Sigmoid colon (tissue), 7 donors: ENCODE measurements at regions of chr20 and their contacts with region 1.

Region 1: GRCh38 chr20:34558320-34559218 is at the start of gene MAP1LC3A:
- DNase-seq: peak; percentile 99
- H3K4me3 ChIP-seq: peak within 1 kb of the TSS; percentile 70 to 94 (median 86)
- H3K27ac ChIP-seq: peak within 1 kb of the TSS; percentile 93 to 98 (median 96)
- H3K4me1 ChIP-seq: peaks cover 0 to 20% (median 12%) of the 10 kb centered on the region in 4 donors
- H3K27me3 ChIP-seq: no peaks in the 10 kb centered on the region
- CTCF ChIP-seq: no peak
- EP300 ChIP-seq: no peak
- POLR2A ChIP-seq: peak in 1 of 2 donors; percentile 5
- total RNA-seq, gene MAP1LC3A: 51.0 to 88.1 (median 77.8) TPM

Region 2: GRCh38 chr20:34516247-34517113 is 42.1 kb before region 1 on chr20 and contains the start of gene DYNLRB1:
- intact Hi-C with region 1: loop called (anchors 2 kb)
- DNase-seq: peak; percentile 99
- H3K4me3 ChIP-seq: peak within 1 kb of the TSS; percentile 51 to 78 (median 67)
- H3K27ac ChIP-seq: peak within 1 kb of the TSS; percentile 83 to 98 (median 92)
- H3K4me1 ChIP-seq: peaks cover 0 to 58% (median 33%) of the 10 kb centered on the region in 4 donors
- H3K27me3 ChIP-seq: no peaks in the 10 kb centered on the region
- CTCF ChIP-seq: no peak
- EP300 ChIP-seq: no peak
- POLR2A ChIP-seq: peak; percentile 78 to 90
- total RNA-seq, gene DYNLRB1: 148 to 181 (median 165) TPM

Region 3: GRCh38 chr20:34522969-34523871 is 35.3 kb before region 1 on chr20:
- intact Hi-C with region 1: loop called (anchors 2 kb)
- DNase-seq: no peak
- H3K4me3 ChIP-seq: no peak overlapping the region
- H3K27ac ChIP-seq: peak overlapping the region; percentile 75 to 86 (median 82)
- H3K4me1 ChIP-seq: peaks cover 0 to 79% (median 57%) of the 10 kb centered on the region in 4 donors
- H3K27me3 ChIP-seq: no peaks in the 10 kb centered on the region
- CTCF ChIP-seq: peak in 3 of 4 experiments; percentile 41 to 43 (median 41)
- EP300 ChIP-seq: no peak
- POLR2A ChIP-seq: no peak